Sciatic nerve (tissue), 2 donors: ENCODE measurements at regions of chr3 and their contacts with region 1.

Region 1: GRCh38 chr3:56988458-56989168 is 71.9 kb upstream of the SPATA12 start:
- DNase-seq: peak; percentile 93
- ATAC-seq: peak; percentile 85

Region 2: GRCh38 chr3:56702490-56703315 is 285.9 kb before region 1 on chr3:
- intact Hi-C with region 1: loop called (anchors 5 kb)
- DNase-seq: no peak
- ATAC-seq: peak; percentile 84

Region 3: DNA sequence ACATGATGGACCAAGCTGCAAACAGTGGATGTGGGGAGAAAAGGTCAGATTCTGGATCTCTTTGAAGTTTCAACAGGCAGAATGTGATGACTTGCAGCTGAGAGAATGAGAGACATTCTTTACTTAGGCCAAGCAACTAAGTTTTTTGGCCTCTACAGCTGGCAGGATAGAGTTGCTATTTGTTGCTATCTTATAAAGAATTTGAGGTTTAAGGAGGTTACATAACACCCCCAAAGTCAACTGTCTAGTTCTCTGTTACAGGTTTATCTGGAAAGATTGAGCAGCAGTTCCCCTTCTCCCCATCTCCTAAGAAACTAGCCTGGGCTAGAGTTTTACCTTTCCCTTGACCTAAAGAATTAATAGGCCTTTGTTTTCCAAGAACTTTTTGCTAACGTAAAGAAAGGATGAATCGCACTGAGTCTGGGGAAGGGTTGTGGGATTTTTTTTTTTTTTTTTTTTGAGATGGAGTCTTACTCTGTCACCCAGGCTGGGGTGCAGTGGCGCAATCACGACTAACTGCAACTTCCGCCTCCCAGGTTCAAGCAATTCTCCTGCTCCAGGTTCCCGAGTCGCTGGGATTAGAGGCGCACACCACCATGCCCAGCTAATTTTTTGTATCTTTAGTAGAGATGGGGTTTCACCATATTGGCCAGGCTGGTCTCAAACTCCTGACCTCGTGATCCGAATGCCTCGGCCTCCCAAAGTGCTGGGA is 740.9 kb after region 1 on chr3:
- intact Hi-C with region 1: no loop called
- DNase-seq: no peak
- ATAC-seq: no peak

Region 4: DNA sequence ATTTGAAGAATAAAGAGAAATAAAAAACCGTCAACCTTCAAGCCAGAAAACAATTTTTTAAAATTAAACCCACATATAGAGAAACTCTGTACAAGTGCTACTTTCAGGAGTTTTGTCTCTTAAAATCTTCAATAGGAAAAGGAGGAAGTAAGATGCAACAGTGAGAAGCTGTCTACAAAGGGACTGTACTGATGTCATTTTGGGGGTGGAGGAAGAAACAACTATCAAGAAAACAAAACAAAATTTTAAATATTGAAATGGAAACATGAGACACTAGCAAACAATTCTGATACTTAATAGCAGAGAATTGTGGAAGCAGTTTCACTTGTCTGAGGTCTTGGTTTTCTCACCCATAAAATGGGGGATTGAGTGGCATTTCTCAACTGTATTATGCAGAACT is 851.9 kb after region 1 on chr3:
- intact Hi-C with region 1: no loop called
- DNase-seq: no peak
- ATAC-seq: no peak